GM12878 (cell line): ENCODE measurements at regions of chr1 and their contacts with region 1.

Region 1: DNA sequence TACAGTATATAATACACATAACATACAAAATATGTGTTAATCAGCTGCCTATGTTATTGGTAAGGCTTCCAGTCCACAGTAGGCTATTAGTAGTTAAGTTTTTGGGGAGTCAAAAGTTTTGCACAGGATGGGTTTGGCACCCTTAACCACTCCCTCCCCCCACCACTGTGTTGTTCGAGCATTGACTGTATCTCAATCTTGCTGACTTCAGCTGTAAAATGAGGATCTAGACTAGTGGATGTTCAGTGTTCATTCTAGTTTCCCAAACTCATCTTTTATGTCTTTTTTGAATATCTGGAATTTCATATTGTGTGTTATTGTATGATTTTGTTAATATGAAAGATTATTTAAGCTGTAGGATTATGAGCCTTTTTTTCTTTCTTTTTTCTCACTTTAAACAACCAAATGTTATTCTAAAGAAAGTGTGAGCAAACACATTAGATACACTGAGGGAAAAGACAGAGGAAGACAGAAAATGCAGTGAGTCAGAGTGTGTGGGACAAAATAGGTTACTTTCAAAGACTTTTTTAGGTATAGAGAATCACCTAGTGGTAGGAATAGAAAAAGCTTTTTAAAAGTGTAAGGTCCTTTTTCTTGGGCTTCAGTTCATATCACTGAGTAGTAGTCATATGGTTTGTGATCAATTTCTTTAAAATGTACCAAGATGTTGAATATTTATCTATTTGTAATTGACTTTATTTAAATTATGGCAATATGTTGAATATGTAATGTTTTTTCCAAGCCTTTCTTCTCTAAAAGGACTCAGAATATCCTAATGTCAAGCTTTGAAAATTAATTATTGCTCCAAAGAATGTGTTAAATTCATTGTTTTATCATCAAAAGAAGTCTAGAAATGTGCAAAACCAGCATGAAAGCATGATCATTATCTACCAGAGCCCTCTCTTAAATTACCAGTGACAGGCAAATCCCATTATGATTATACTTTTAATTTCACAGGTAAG is 17.9 kb upstream of the CENPF start:
- DNase-seq: no peak
- ATAC-seq: peak; percentile 90
- H3K4me3 ChIP-seq: no peak overlapping the region
- H3K27ac ChIP-seq: no peak overlapping the region
- H3K4me1 ChIP-seq: no peaks in the 10 kb centered on the region
- H3K27me3 ChIP-seq: no peaks in the 10 kb centered on the region
- CTCF ChIP-seq: peak; percentile 40 to 72 (median 69); a peak in 5 of 6 replicates
- EP300 ChIP-seq: no peak
- POLR2A ChIP-seq: no peak
- RAD21 ChIP-seq: peak; percentile 73

Region 2: DNA sequence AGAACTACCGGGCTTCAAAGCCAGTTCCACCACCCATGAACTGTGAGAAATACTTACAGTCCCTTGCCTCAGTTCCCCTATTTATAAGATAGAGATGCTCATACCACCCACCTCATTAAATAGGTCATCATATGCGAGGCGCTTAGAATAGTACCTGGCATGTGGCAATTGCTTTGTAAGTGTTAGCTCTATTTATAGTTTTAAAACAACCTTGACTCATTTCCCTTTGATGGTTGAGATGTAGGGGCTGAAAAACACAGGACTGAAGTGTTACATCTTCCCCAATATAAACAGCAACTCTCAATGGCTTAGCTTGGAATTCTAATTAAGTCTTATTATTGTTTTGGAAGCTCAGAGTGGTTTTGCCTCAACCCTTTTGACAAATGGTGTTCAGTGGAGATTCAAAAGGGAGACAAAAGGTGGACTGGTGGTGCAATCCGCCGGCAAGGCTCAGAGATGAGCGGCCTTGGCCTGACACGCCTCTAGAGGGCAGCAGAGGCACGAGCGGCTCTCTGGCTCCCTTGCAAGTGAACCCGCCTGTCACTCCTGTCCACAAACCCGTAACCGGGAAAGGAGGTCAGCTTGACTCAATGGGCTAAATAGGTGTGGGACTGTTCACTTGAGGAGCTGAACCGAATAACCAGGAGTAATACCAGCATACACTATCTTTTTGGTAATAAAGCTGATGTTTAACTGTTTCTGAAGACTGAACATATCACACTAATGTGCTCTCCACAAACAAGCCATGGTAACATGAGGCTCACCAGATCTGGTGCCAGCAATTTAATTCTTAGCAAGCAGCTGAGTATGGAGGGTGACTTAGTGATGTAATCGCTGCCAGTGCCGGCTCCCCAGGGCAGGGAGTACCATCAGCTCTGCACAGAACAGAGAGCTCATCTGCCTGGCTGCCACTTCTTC is 323.6 kb before region 1 on chr1:
- CTCF ChIA-PET with region 1: interaction called, 28 read pairs
- POLR2A ChIA-PET with region 1: no interaction called
- RAD21 ChIA-PET with region 1: interaction called, 8 read pairs
- SMC1A ChIA-PET with region 1: interaction called, 8 read pairs
- in situ Hi-C with region 1: no loop called
- intact Hi-C with region 1: loop called (anchors 5 kb)
- DNase-seq: no peak
- ATAC-seq: peak; percentile 99
- H3K4me3 ChIP-seq: no peak overlapping the region
- H3K27ac ChIP-seq: no peak overlapping the region
- H3K4me1 ChIP-seq: no peaks in the 10 kb centered on the region
- H3K27me3 ChIP-seq: peaks cover 2 to 3% of the 10 kb centered on the region in 2 experiments; a peak in 1 of 4 replicates
- CTCF ChIP-seq: peak; percentile 91 to 98 (median 95); a peak in 5 of 6 replicates
- EP300 ChIP-seq: no peak
- POLR2A ChIP-seq: no peak
- RAD21 ChIP-seq: peak; percentile 87

Region 3: GRCh38 chr1:214404154-214404553 is 180.9 kb before region 1 on chr1:
- CTCF ChIA-PET with region 1: interaction called, 8 read pairs
- POLR2A ChIA-PET with region 1: no interaction called
- RAD21 ChIA-PET with region 1: interaction called, 6 read pairs
- SMC1A ChIA-PET with region 1: interaction called, 10 read pairs
- in situ Hi-C with region 1: no loop called
- intact Hi-C with region 1: no loop called
- DNase-seq: peak; percentile 12
- ATAC-seq: peak; percentile 84
- H3K4me3 ChIP-seq: no peak overlapping the region
- H3K27ac ChIP-seq: no peak overlapping the region
- H3K4me1 ChIP-seq: no peaks in the 10 kb centered on the region
- H3K27me3 ChIP-seq: no peaks in the 10 kb centered on the region
- CTCF ChIP-seq: no peak
- EP300 ChIP-seq: peak; percentile 59 to 63; a peak in 2 of 4 replicates
- POLR2A ChIP-seq: no peak
- RAD21 ChIP-seq: no peak

Region 4: DNA sequence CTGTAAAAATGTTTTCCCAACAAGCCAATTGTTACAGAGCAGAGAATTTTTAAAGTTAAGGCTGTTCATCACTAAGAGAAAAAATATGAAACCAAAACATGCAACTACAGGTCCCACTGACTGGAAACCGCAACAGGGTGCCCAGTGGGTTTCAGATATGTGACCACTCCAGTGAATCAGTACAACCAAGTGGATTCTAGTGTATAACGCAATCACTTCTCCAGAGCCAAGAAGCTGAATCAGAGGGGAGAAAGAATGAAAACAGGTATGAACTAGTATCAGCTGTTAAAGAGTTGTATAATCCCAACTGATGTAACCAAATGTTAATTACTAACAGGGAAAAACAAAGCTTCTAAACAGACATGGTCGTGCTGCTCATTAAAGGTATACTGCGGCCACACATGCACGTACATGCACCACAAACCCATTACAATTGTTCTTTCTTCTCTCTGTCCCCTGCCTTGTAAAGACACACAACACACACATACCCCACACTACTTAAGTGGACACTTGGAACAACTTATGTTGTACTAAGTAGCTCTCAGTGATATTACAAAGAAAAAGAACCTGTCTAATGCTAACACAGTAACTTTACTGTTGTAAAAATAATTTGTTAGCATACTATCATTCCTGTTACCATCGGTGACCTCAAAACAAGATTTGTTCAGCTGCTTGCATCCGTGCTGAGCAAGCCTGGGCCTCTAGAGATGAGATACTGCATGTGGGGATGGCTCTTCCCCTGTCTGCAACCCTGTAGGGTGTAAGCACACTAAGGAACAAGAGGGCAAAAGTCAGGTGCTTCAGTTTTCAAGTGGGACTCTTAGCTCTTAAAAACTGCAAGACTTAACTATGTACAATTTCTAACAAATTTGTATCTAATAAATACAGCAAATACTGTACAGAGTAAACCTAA is 107.9 kb before region 1 on chr1:
- CTCF ChIA-PET with region 1: interaction called, 4 read pairs
- POLR2A ChIA-PET with region 1: no interaction called
- RAD21 ChIA-PET with region 1: interaction called, 10 read pairs
- SMC1A ChIA-PET with region 1: interaction called, 5 read pairs
- in situ Hi-C with region 1: no loop called
- intact Hi-C with region 1: no loop called
- DNase-seq: no peak
- ATAC-seq: peak; percentile 74
- H3K4me3 ChIP-seq: no peak overlapping the region
- H3K27ac ChIP-seq: no peak overlapping the region
- H3K4me1 ChIP-seq: no peaks in the 10 kb centered on the region
- H3K27me3 ChIP-seq: no peaks in the 10 kb centered on the region
- CTCF ChIP-seq: no peak
- EP300 ChIP-seq: no peak
- POLR2A ChIP-seq: no peak
- RAD21 ChIP-seq: no peak

Region 5: GRCh38 chr1:214551436-214552173 is 33.5 kb before region 1 on chr1 and contains the start of gene PTPN14:
- CTCF ChIA-PET with region 1: interaction called, 17 read pairs
- POLR2A ChIA-PET with region 1: interaction called, 3 read pairs
- RAD21 ChIA-PET with region 1: interaction called, 6 read pairs
- SMC1A ChIA-PET with region 1: interaction called, 15 read pairs
- in situ Hi-C with region 1: no loop called
- intact Hi-C with region 1: no loop called
- DNase-seq: no peak
- ATAC-seq: peak; percentile 44
- H3K4me3 ChIP-seq: no peak within 1 kb of the TSS
- H3K27ac ChIP-seq: no peak within 1 kb of the TSS
- H3K4me1 ChIP-seq: no peaks in the 10 kb centered on the region
- H3K27me3 ChIP-seq: peaks cover 3 to 7% of the 10 kb centered on the region in 2 experiments; a peak in 3 of 4 replicates
- CTCF ChIP-seq: no peak
- EP300 ChIP-seq: no peak
- POLR2A ChIP-seq: no peak
- RAD21 ChIP-seq: no peak
- polyA plus RNA-seq, gene PTPN14: 0.05 to 0.14 TPM